Endothelial cell of umbilical vein (primary cell): ENCODE measurements at regions of chr20 and their contacts with region 1.

Region 1: DNA sequence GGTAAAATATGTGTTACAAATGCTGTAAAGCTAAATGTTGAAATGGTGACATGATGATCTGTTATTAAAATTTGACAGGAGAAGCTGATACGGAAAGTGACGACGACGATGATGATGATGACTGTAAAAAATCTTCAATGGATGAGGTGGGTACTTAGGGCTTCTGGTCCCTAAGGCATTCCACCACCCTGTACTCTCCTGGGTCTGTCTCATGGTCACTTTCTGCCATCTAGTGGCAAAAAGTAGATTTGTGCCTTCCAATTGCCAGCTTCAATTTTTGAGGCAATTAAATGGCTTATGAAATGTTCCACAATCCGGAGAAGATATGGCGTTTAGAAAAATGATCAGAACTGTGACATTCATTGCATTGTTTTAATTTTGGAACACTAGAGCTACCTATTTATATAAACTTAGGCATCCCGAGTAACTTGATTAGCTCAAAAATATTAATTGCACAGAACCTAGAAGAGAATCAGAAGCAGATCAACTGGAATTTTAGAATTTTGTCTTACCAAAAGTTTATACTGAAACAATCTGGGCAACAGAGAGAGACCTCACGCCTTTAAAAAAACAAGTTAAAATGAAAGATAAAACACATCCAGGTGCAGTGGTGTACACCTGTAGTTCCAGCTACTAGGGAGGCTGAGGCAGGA is 346.5 kb upstream of the PLCB4 start:
- DNase-seq: peak; percentile 83
- H3K4me3 ChIP-seq: no peak overlapping the region
- H3K27ac ChIP-seq: no peak overlapping the region
- H3K4me1 ChIP-seq: no peaks in the 10 kb centered on the region
- H3K27me3 ChIP-seq: no peaks in the 10 kb centered on the region
- CTCF ChIP-seq: peak; percentile 62
- POLR2A ChIP-seq: no peak

Region 2: GRCh38 chr20:7935027-7935551 is 787.3 kb before region 1 on chr20:
- CTCF ChIA-PET with region 1: interaction called, 531 read pairs
- POLR2A ChIA-PET with region 1: interaction called, 5 read pairs
- dilution Hi-C with region 1: no loop called
- intact Hi-C with region 1: loop called (anchors 1 kb)
- DNase-seq: no peak
- H3K4me3 ChIP-seq: no peak overlapping the region
- H3K27ac ChIP-seq: no peak overlapping the region
- H3K4me1 ChIP-seq: peaks cover 10% of the 10 kb centered on the region
- H3K27me3 ChIP-seq: no peaks in the 10 kb centered on the region
- CTCF ChIP-seq: no peak
- POLR2A ChIP-seq: no peak

Region 3: DNA sequence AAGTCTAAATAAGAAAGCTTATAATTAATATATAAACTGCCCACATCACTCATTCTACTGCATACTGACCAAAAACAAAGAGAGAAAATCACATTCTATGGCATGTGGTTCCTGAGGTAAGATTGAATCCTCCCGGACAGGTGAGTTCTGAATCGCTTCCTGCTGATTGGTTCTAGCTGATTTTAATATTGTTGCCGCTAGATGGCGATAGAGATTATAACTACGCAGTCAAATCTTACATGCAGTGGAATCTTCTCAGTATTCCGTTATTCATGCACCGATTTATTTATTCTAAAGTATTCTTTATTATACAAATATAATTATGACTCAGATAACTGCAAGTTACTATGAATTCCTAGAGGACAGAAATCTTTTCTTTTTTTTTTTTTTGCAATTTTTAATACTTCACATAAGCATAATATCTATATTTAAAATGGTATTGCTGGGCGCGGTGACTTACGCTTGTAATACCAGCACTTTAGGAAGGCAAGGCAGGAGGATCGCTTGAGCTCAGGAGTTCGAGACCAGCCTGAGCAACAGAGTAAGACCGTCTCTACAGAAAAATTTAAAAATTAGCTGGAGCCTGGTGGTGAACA is 678.6 kb before region 1 on chr20:
- CTCF ChIA-PET with region 1: interaction called, 288 read pairs
- POLR2A ChIA-PET with region 1: no interaction called
- dilution Hi-C with region 1: no loop called
- intact Hi-C with region 1: loop called (anchors 1 kb)
- DNase-seq: peak; percentile 56
- H3K4me3 ChIP-seq: no peak overlapping the region
- H3K27ac ChIP-seq: no peak overlapping the region
- H3K4me1 ChIP-seq: peaks cover 24% of the 10 kb centered on the region
- H3K27me3 ChIP-seq: no peaks in the 10 kb centered on the region
- CTCF ChIP-seq: peak; percentile 38 to 50
- POLR2A ChIP-seq: no peak

Region 4: DNA sequence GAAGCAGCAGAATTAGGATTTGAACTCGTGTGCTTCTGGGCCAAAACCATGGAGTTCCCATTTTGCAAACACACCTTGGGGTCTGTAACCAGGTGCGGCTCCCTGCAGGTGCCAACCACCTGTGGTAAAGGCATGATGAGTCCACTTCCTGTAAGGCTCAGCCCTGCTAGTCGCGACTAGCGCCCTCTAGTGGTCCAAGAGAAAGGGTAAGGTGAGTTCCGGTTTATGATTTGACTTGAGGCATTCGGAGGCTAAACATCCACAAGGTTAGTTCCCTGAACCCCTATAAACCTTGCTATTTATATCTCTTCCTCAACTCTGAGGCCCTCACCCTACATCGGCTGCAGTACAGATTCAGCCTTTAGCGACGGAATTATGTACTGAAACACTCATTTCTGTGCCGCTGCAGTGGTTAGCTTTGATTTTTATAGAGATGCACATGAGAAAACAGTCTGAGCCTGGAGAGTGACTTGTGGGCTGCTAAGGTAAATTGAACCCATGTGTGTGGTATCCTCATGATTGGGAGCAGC is 416.9 kb before region 1 on chr20:
- CTCF ChIA-PET with region 1: interaction called, 5 read pairs
- POLR2A ChIA-PET with region 1: no interaction called
- dilution Hi-C with region 1: no loop called
- intact Hi-C with region 1: loop called (anchors 1 kb)
- DNase-seq: peak; percentile 42
- H3K4me3 ChIP-seq: no peak overlapping the region
- H3K27ac ChIP-seq: no peak overlapping the region
- H3K4me1 ChIP-seq: no peaks in the 10 kb centered on the region
- H3K27me3 ChIP-seq: no peaks in the 10 kb centered on the region
- CTCF ChIP-seq: peak; percentile 67 to 79
- POLR2A ChIP-seq: no peak

Region 5: DNA sequence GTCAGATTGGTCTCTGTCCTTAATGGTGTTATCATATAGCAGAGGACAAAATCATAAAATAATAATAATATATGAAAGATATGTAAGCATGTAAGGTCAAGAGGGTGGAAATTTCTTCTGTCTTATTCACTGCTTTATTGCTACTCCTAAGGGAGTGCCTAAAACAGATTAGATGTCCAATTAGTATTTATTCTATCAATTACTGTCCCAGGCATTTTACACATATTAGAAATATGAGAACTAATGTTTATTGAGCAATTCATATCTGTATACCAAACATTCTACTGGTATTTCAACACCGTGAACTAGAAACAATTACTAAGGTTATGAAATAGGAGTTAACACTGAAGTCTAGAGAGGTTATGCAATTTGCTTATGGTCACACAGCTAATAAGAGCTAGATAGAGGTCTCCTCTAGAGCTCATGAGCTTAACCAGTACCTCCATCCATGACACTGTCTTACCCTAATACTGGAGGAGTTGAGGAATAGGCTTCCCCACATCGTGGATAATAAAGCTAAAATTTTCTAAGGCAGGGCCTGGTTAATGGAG is 288.0 kb before region 1 on chr20:
- CTCF ChIA-PET with region 1: interaction called, 10 read pairs
- POLR2A ChIA-PET with region 1: no interaction called
- dilution Hi-C with region 1: no loop called
- intact Hi-C with region 1: no loop called
- DNase-seq: no peak
- H3K4me3 ChIP-seq: no peak overlapping the region
- H3K27ac ChIP-seq: no peak overlapping the region
- H3K4me1 ChIP-seq: peaks cover 10% of the 10 kb centered on the region
- H3K27me3 ChIP-seq: no peaks in the 10 kb centered on the region
- CTCF ChIP-seq: no peak
- POLR2A ChIP-seq: no peak

Region 6: GRCh38 chr20:8711501-8711900 is 10.9 kb before region 1 on chr20:
- CTCF ChIA-PET with region 1: interaction called, 25 read pairs
- POLR2A ChIA-PET with region 1: no interaction called
- dilution Hi-C with region 1: no loop called
- intact Hi-C with region 1: no loop called
- DNase-seq: no peak
- H3K4me3 ChIP-seq: no peak overlapping the region
- H3K27ac ChIP-seq: no peak overlapping the region
- H3K4me1 ChIP-seq: no peaks in the 10 kb centered on the region
- H3K27me3 ChIP-seq: no peaks in the 10 kb centered on the region
- CTCF ChIP-seq: no peak
- POLR2A ChIP-seq: no peak

Region 7: GRCh38 chr20:8909596-8909995 is 187.2 kb after region 1 on chr20:
- CTCF ChIA-PET with region 1: no interaction called
- POLR2A ChIA-PET with region 1: no interaction called
- dilution Hi-C with region 1: no loop called
- intact Hi-C with region 1: no loop called
- DNase-seq: no peak
- H3K4me3 ChIP-seq: no peak overlapping the region
- H3K27ac ChIP-seq: no peak overlapping the region
- H3K4me1 ChIP-seq: no peaks in the 10 kb centered on the region
- H3K27me3 ChIP-seq: no peaks in the 10 kb centered on the region
- CTCF ChIP-seq: no peak
- POLR2A ChIP-seq: no peak

Region 8: GRCh38 chr20:9093218-9093957 is 371.0 kb after region 1 on chr20:
- CTCF ChIA-PET with region 1: no interaction called
- POLR2A ChIA-PET with region 1: no interaction called
- dilution Hi-C with region 1: no loop called
- intact Hi-C with region 1: no loop called
- DNase-seq: peak; percentile 86
- H3K4me3 ChIP-seq: no peak overlapping the region
- H3K27ac ChIP-seq: no peak overlapping the region
- H3K4me1 ChIP-seq: peaks cover 5% of the 10 kb centered on the region
- H3K27me3 ChIP-seq: no peaks in the 10 kb centered on the region
- CTCF ChIP-seq: no peak
- POLR2A ChIP-seq: no peak